Activated B cell treated with CpG ODN at 0.5 μM for 24 hours (primary cell): ENCODE measurements at regions of chr12 and their contacts with region 1.

Region 1: GRCh38 chr12:116099652-116100432 is 177.7 kb downstream of the MED13L start:
- DNase-seq: no peak
- ATAC-seq: no peak
- H3K4me3 Mint-ChIP-seq: no peak overlapping the region
- H3K27ac Mint-ChIP-seq: no peak overlapping the region
- H3K4me1 Mint-ChIP-seq: peaks cover 41% of the 10 kb centered on the region
- H3K27me3 Mint-ChIP-seq: no peaks in the 10 kb centered on the region
- CTCF ChIP-seq: no peak

Region 2: GRCh38 chr12:116066381-116067230 is 33.2 kb before region 1 on chr12:
- CTCF ChIA-PET with region 1: no interaction called
- POLR2A ChIA-PET with region 1: no interaction called
- intact Hi-C with region 1: loop called (anchors 5 kb)
- DNase-seq: peak; percentile 34
- ATAC-seq: peak; percentile 71
- H3K4me3 Mint-ChIP-seq: no peak overlapping the region
- H3K27ac Mint-ChIP-seq: peak overlapping the region; percentile 60
- H3K4me1 Mint-ChIP-seq: peaks cover 44% of the 10 kb centered on the region
- H3K27me3 Mint-ChIP-seq: no peaks in the 10 kb centered on the region
- CTCF ChIP-seq: peak; percentile 96

Region 3: GRCh38 chr12:116089080-116089479 is 10.8 kb before region 1 on chr12:
- CTCF ChIA-PET with region 1: no interaction called
- POLR2A ChIA-PET with region 1: no interaction called
- intact Hi-C with region 1: loop called (anchors 1 kb)
- DNase-seq: no peak
- ATAC-seq: no peak
- H3K4me3 Mint-ChIP-seq: no peak overlapping the region
- H3K27ac Mint-ChIP-seq: no peak overlapping the region
- H3K4me1 Mint-ChIP-seq: peaks cover 31% of the 10 kb centered on the region
- H3K27me3 Mint-ChIP-seq: no peaks in the 10 kb centered on the region
- CTCF ChIP-seq: no peak